WTC11 (cell line): ENCODE measurements at regions of chr22 and their contacts with region 1.

Region 1: GRCh38 chr22:26172389-26172990 is 3.2 kb downstream of the SEZ6L start:
- DNase-seq: peak; percentile 76
- ATAC-seq: peak; percentile 44
- H3K4me3 Mint-ChIP-seq: no peak overlapping the region
- H3K27ac Mint-ChIP-seq: no peak overlapping the region
- H3K4me1 Mint-ChIP-seq: peaks cover 34% of the 10 kb centered on the region
- H3K27me3 Mint-ChIP-seq: peaks cover 55% of the 10 kb centered on the region
- CTCF ChIP-seq: peak; percentile 67

Region 2: DNA sequence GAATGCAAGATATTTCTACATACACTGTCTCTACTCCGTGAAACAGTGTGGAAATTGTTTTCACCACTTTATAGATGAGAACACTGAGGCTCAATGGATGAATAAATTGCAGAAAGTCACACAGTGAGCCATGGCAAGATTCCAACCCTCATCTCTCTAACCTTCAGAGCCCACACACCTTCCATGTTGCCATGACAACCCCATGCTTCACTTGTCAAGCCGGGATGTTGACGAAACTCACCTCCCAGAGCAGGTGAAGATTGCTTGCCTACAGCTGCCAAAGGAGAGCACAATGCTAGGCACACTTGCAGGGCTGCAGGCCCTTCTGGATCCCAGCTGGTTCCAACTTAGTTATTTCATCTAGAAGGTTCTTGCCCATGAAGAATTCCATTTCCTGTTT is 74.7 kb before region 1 on chr22:
- CTCF ChIA-PET with region 1: no interaction called
- POLR2A ChIA-PET with region 1: no interaction called
- DNase-seq: no peak
- ATAC-seq: no peak
- H3K4me3 Mint-ChIP-seq: no peak overlapping the region
- H3K27ac Mint-ChIP-seq: no peak overlapping the region
- H3K4me1 Mint-ChIP-seq: no peaks in the 10 kb centered on the region
- H3K27me3 Mint-ChIP-seq: peaks cover 5% of the 10 kb centered on the region
- CTCF ChIP-seq: no peak

Region 3: DNA sequence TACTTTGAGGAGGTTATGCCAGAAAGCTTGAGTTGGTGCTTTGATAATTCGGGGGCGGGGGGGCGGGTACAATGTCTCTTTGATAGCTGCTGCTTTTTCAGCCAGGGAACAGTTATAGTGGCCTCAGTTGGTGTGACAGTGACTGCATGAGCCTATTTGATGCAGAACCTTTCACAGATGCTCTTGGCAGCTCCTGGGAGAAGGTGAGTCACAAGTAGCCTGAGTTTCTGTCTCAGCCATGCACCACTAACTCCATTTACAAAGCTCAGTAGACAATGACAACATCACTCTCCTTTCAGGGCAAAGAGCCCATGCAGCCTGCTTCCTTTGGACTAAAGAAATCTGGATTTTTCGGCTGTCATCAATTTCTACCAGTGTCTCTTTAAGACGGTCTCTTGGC is 45.4 kb before region 1 on chr22:
- CTCF ChIA-PET with region 1: interaction called, 22 read pairs
- POLR2A ChIA-PET with region 1: no interaction called
- DNase-seq: no peak
- ATAC-seq: no peak
- H3K4me3 Mint-ChIP-seq: no peak overlapping the region
- H3K27ac Mint-ChIP-seq: no peak overlapping the region
- H3K4me1 Mint-ChIP-seq: peaks cover 19% of the 10 kb centered on the region
- H3K27me3 Mint-ChIP-seq: no peaks in the 10 kb centered on the region
- CTCF ChIP-seq: no peak

Region 4: DNA sequence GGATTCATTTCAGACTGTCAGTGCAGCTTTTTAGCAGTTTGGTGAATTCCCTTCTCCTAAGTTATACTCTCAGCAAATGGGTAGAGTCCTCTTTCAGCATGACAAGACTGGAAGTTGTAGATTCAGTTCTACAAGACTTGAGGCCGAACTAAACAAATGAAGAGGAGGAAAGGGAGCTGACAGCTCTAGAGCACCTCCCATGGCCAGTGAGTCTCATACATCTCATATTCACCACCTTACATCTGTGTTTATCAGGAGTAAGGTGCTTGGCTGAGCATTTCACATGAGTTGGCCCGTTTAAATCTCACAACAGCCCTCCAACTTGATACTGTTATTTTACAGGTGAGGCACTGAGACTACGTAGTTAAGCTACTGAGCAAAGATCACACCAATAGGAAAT is 27.2 kb after region 1 on chr22:
- CTCF ChIA-PET with region 1: interaction called, 13 read pairs
- POLR2A ChIA-PET with region 1: no interaction called
- DNase-seq: no peak
- ATAC-seq: peak; percentile 70; the same call in 1 of the 2 replicates
- H3K4me3 Mint-ChIP-seq: no peak overlapping the region
- H3K27ac Mint-ChIP-seq: no peak overlapping the region
- H3K4me1 Mint-ChIP-seq: peaks cover 6% of the 10 kb centered on the region
- H3K27me3 Mint-ChIP-seq: no peaks in the 10 kb centered on the region; the same call in 1 of the 2 replicates
- CTCF ChIP-seq: no peak

Region 5: GRCh38 chr22:26287382-26288225 is 115.1 kb after region 1 on chr22:
- CTCF ChIA-PET with region 1: interaction called, 16 read pairs
- POLR2A ChIA-PET with region 1: no interaction called
- DNase-seq: no peak
- ATAC-seq: no peak
- H3K4me3 Mint-ChIP-seq: no peak overlapping the region
- H3K27ac Mint-ChIP-seq: no peak overlapping the region
- H3K4me1 Mint-ChIP-seq: peaks cover 3% of the 10 kb centered on the region; the same call in 1 of the 2 replicates
- H3K27me3 Mint-ChIP-seq: no peaks in the 10 kb centered on the region
- CTCF ChIP-seq: no peak

Region 6: GRCh38 chr22:26321469-26321913 is 149.0 kb after region 1 on chr22:
- CTCF ChIA-PET with region 1: interaction called, 62 read pairs
- POLR2A ChIA-PET with region 1: no interaction called
- DNase-seq: no peak
- ATAC-seq: no peak; the same call in 1 of the 2 replicates
- H3K4me3 Mint-ChIP-seq: no peak overlapping the region
- H3K27ac Mint-ChIP-seq: no peak overlapping the region; the same call in 1 of the 2 replicates
- H3K4me1 Mint-ChIP-seq: no peaks in the 10 kb centered on the region
- H3K27me3 Mint-ChIP-seq: no peaks in the 10 kb centered on the region
- CTCF ChIP-seq: no peak

Region 7: GRCh38 chr22:26364066-26365015 is 191.9 kb after region 1 on chr22:
- CTCF ChIA-PET with region 1: interaction called, 23 read pairs
- POLR2A ChIA-PET with region 1: no interaction called
- DNase-seq: peak; percentile 79
- ATAC-seq: peak; percentile 96
- H3K4me3 Mint-ChIP-seq: no peak overlapping the region
- H3K27ac Mint-ChIP-seq: no peak overlapping the region
- H3K4me1 Mint-ChIP-seq: peaks cover 3% of the 10 kb centered on the region; the same call in 1 of the 2 replicates
- H3K27me3 Mint-ChIP-seq: peaks cover 5% of the 10 kb centered on the region
- CTCF ChIP-seq: 0 out of 2 replicates have a peak, but pooled peaks have one; percentile 47